Activated CD4-positive, alpha-beta T cell treated with anti-CD3 and anti-CD28 coated beads for 36 hours (primary cell): ENCODE measurements at regions of chr18 and their contacts with region 1.

Region 1: DNA sequence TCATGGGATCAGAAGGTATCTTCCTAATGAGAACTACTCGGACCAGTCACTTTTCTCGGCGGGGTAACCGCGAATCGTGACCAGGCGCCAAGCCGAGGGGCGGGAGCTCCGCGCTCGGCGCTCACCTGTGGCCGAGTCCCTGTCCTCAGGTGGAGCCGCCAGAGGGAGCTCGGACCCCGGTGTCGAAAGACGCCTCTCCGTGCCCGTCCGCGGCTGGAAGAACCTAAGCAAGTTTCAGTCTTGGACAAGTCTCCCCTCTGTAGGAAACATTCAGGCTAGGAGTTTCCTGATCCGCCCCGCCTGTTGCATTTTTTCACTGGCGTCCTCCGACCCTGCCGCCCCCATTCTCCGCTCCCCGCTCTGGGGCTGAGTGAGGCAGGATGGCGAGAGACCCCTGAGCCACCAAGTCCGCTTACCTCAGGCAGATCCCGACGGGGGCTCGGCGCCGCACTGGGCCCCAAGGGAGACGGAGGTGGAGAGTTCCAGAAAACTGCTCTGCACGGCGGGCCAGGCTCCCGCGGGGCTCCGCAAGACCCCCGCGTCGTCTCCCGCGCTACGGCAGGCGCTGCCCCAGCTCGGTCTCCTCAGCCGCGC is 478 bp downstream of the DSEL start:
- DNase-seq: peak; percentile 78
- ATAC-seq: peak; percentile 10
- H3K4me3 Mint-ChIP-seq: peak overlapping the region; percentile 90
- H3K27ac Mint-ChIP-seq: peak overlapping the region; percentile 37
- H3K4me1 Mint-ChIP-seq: peaks cover 16% of the 10 kb centered on the region
- H3K27me3 Mint-ChIP-seq: peaks cover 15% of the 10 kb centered on the region

Region 2: DNA sequence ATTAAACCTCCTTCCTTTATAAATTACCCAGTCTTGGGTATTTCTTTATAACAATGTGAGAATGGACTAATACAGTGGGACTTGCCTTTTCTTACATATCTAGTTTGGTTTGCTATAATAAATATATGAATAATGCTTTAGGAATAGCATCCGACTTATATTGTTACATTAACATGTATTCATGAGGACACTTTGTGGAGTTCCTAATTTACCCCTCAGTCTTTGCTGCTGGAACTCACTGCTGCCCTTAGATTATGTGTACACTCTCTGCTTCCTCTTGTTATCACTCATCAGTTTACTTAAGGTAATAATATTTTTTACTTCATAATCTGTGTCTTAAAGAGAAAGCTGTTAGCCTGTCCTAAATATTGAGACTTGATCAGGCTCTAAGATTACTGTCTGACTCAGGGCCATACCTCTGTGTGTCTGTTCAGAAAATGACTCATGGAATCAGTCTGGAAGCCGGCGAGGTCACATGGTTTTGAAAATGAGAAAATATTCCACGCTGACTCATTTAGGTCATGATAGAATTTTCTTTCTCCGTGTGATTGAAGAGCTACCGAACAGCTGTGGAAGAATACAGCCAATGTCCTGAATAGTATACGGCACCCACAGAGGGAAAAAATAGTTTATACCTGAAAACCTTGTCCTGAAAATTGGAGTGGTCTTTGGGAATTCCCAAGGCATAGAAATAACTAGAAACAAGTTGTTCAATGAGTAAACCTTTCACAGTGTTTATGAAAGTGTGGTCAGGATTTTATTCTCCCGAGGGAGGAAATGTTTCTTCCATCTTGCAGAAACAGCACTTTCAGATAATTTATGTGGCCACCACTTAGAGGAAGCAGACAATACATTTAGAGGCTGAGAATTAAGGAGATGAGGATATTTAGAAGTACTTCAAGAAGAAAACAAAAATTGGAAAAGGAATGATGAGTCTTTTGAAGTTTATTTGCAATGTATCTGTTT is 155.9 kb before region 1 on chr18:
- CTCF ChIA-PET with region 1: no interaction called
- POLR2A ChIA-PET with region 1: no interaction called
- intact Hi-C with region 1: loop called (anchors 5 kb)
- DNase-seq: peak; percentile 60
- ATAC-seq: peak; percentile 99
- H3K4me3 Mint-ChIP-seq: peak overlapping the region; percentile 29
- H3K27ac Mint-ChIP-seq: peak overlapping the region; percentile 42
- H3K4me1 Mint-ChIP-seq: peaks cover 14% of the 10 kb centered on the region
- H3K27me3 Mint-ChIP-seq: peaks cover 2% of the 10 kb centered on the region

Region 3: GRCh38 chr18:67577386-67577785 is 61.3 kb after region 1 on chr18:
- CTCF ChIA-PET with region 1: no interaction called
- POLR2A ChIA-PET with region 1: no interaction called
- intact Hi-C with region 1: no loop called
- DNase-seq: no peak
- ATAC-seq: no peak
- H3K4me3 Mint-ChIP-seq: no peak overlapping the region
- H3K27ac Mint-ChIP-seq: no peak overlapping the region
- H3K4me1 Mint-ChIP-seq: no peaks in the 10 kb centered on the region
- H3K27me3 Mint-ChIP-seq: no peaks in the 10 kb centered on the region

Region 4: DNA sequence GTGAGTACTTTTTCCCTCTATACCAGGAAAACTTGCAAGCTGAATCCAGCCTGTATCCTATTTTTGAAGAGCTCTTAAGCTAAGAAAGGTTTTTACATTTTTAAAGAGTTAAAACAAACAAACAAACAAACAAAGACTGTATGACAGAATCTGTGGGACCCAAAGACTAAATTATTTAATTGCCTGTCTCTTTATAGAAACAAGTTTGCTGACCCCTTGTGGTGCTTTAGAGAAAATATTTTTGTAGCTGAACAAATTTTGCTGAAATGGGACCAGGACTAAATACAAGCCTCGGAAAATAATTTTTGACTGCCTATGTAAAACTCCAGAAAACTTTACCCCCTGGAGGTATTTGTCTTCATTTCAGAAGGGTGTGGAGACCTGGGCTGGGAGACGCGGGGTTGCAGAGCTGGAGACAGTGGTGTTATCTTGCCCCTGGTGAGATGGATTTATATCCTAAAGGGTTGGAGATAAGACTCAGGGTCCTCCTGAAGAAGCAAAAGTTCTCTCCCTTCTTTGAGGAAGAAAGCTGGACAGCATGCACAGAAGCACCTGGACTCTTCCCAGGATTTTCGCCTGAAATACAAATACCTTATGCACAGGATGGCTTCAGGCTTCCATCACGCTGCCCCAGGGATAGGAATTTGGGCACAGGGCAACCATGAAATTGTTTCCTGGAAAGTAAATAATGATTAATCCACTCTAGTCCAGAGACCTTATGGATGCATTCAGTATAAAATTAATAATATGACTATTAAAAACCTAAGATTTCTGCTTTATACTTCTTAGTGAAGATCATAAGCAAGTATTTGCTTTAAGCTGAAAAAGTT is 1144.5 kb after region 1 on chr18:
- CTCF ChIA-PET with region 1: no interaction called
- POLR2A ChIA-PET with region 1: no interaction called
- intact Hi-C with region 1: loop called in 1 of 2 experiments (anchors 2 kb)
- DNase-seq: no peak
- ATAC-seq: no peak
- H3K4me3 Mint-ChIP-seq: no peak overlapping the region
- H3K27ac Mint-ChIP-seq: no peak overlapping the region
- H3K4me1 Mint-ChIP-seq: no peaks in the 10 kb centered on the region
- H3K27me3 Mint-ChIP-seq: no peaks in the 10 kb centered on the region

Region 5: DNA sequence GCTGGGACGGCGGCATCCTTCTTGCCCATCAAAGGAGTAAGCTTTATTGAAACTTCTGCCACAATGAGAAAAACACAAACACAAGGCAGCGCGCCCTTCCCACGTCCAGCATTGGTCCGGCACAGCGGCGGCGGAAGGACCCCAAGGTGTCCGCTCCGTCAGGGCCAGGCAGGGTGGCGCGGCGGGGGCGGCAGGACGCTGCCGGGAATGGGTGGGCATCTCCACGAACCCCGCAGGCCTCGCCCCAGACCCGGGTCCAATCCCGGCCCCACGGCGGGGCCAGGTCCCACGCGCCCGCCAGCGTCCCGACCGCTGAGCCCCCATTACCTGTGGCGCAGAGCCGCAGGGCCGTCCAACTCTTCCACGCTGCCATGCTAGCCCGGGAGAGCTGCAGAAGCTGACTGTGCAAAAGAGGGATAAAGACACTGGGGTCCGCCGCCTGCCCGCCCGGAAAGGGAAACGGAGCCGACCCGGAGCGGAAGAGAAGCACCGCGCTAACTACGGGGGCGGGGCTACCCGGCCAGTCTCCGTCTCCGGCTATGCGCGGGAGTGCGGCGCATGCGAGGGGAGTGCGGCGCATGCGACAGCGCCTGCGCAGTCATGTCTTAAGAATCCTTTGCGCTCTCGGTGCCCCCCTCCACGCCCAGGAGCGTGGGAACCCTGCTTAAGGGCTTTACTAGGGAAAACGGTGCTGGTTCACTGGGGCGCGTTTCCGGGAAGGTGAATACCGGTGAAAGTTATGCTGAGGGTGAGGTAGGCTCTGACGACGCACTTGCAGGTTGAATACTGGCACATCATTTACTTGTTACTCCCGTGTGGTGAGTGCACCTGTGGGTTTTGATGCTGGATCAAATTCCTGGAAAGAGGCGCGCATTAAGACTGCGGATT is 1198.8 kb after region 1 on chr18 and contains the start of gene TMX3:
- CTCF ChIA-PET with region 1: no interaction called
- POLR2A ChIA-PET with region 1: no interaction called
- intact Hi-C with region 1: loop called (anchors 1 to 10 kb)
- DNase-seq: peak; percentile 95
- ATAC-seq: peak; percentile 99
- H3K4me3 Mint-ChIP-seq: peak within 1 kb of the TSS; percentile 99
- H3K27ac Mint-ChIP-seq: peak within 1 kb of the TSS; percentile 97
- H3K4me1 Mint-ChIP-seq: peaks cover 34% of the 10 kb centered on the region
- H3K27me3 Mint-ChIP-seq: no peaks in the 10 kb centered on the region
- total RNA-seq, gene TMX3: 46.9 to 49.9 TPM